ENCODE measurements at regions of chr6 and their contacts with region 1.

Region 1: DNA sequence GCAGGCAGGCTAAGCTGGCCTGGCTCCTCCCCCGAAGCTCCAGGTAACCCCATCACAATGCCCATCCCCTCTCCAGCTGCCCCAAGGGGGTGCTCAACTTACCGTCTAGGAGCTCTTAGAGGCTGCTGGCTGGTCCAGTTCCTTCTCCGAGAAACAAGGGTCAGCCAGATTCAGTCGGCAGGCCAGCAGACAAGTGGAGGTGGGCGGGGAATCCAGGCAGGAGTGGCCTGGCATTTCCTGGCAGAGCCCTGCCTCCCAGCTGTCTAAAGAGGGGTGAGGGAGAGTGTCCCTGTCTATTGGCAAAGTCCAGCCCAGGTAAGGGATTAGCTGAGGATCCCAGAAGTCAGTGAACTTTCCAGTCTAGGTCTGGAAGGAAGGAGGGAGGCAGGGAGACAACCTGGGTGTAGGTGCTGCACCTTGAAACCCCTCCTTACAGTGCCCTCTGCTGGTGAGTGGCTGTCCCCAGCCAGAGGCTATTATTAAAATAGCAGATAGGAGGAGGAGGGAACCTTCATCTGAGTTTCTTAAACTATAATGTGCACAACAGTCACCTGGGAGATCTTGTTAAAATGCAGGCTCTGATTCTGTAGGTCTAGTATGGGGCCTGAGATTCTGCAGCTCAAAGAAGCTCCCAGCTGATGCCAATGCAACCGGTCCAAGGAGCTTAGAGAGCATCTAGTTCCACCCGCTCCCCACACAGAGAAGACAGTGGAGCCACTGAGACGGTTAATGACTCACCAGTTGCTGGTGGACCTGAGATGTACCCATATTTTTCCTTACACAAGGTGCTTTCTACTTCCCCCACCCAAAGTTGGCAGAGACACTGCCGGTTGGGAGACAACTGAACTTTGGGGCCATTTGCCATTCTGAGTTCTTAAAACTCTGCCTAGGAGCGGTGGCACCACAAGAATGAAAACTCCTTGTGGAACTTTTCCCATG is at the start of gene UNC5CL:
- DNase-seq: peak in 1 of 2 donors; percentile 62
- ATAC-seq: peak; percentile 58 to 85 (median 70)
- H3K4me3 ChIP-seq: no peak within 1 kb of the TSS
- H3K27ac ChIP-seq: peak within 1 kb of the TSS; percentile 46
- H3K4me1 ChIP-seq: peaks cover 15% of the 10 kb centered on the region
- H3K27me3 ChIP-seq: no peaks in the 10 kb centered on the region
- CTCF ChIP-seq: peak; percentile 73
- total RNA-seq, gene UNC5CL: 0.14 to 0.43 (median 0.28) TPM

Region 2: GRCh38 chr6:39347906-39348585 is 1691.3 kb before region 1 on chr6:
- intact Hi-C with region 1: loop called in 1 of 2 experiments (anchors 10 kb)
- DNase-seq: peak; percentile 70 to 78
- ATAC-seq: peak; percentile 83 to 86 (median 84)
- H3K4me3 ChIP-seq: no peak overlapping the region
- H3K27ac ChIP-seq: no peak overlapping the region
- H3K4me1 ChIP-seq: no peaks in the 10 kb centered on the region
- H3K27me3 ChIP-seq: no peaks in the 10 kb centered on the region
- CTCF ChIP-seq: peak; percentile 82